Right ventricle myocardium inferior (tissue), 1 donor: ENCODE measurements at regions of chr21 and their contacts with region 1.

Region 1: DNA sequence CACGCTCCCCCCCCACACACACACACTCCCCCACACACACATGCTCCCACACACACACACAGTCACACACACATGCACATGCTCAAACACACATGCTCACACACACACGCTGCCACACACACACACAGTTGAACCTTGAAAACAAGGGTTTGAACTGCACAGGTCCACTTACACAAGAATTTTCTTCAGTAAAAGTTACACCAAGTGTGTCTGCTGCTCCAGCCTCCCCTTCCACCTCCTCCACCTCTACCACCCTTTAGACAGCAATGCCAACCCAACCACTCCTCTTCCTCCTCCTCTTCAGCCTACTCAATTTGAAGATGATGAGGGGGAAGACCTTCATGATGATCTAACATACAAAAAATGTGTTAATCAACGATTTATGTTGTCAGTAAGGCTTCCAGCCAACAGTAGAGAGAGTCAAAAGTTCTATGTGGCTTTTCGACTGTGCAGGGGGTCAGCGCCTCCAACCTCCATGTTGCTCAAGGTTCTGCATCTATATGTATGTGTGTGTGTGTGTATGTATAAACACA is 26.8 kb downstream of the HSF2BP start:
- DNase-seq: no peak
- ATAC-seq: no peak

Region 2: DNA sequence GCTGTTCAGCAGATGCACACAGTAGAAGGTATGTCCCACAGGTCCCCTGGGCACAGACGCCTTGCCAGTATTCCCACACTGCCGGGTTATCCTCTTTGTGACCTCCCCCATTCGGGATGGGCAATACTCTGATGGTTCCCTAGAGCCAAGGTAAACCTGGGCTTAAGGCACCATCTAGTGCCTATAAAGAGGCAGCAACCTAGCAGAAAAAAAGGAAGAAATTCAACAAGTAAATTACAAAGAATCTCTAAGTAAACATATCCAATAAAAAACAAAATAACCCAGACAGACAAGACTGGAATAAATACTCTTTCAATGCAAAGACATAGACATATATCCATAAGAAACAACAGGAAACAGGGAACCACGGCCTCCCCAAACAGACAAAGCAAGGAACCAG is 12.6 kb before region 1 on chr21:
- intact Hi-C with region 1: loop called (anchors 2 kb)
- DNase-seq: no peak
- ATAC-seq: no peak